Left ventricle myocardium inferior (tissue), 1 donor: ENCODE measurements at regions of chr2 and their contacts with region 1.

Region 1: DNA sequence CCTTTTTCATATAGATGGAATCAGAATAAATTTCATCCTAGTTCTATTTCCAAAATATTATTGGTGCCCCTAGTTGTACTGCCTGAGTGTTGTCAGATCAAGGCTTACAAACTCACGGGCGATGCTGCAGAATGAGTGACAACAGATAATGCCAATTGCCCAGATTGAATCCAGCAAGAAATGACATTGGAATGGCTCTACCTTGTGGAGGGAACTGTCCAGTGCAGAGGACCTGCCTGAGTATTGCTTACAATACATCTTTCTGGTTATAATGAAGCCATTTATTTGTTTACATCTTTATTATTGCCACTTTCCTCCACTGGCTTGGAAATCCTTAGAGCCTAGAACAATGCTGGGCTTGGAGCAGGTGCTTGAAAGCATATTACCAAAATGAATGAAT is 7.8 kb upstream of the IL1R2 start:
- DNase-seq: no peak
- H3K4me3 ChIP-seq: no peak overlapping the region
- H3K27ac ChIP-seq: no peak overlapping the region
- H3K4me1 ChIP-seq: peaks cover 8% of the 10 kb centered on the region
- H3K27me3 ChIP-seq: peaks cover 18% of the 10 kb centered on the region
- CTCF ChIP-seq: peak; percentile 48

Region 2: DNA sequence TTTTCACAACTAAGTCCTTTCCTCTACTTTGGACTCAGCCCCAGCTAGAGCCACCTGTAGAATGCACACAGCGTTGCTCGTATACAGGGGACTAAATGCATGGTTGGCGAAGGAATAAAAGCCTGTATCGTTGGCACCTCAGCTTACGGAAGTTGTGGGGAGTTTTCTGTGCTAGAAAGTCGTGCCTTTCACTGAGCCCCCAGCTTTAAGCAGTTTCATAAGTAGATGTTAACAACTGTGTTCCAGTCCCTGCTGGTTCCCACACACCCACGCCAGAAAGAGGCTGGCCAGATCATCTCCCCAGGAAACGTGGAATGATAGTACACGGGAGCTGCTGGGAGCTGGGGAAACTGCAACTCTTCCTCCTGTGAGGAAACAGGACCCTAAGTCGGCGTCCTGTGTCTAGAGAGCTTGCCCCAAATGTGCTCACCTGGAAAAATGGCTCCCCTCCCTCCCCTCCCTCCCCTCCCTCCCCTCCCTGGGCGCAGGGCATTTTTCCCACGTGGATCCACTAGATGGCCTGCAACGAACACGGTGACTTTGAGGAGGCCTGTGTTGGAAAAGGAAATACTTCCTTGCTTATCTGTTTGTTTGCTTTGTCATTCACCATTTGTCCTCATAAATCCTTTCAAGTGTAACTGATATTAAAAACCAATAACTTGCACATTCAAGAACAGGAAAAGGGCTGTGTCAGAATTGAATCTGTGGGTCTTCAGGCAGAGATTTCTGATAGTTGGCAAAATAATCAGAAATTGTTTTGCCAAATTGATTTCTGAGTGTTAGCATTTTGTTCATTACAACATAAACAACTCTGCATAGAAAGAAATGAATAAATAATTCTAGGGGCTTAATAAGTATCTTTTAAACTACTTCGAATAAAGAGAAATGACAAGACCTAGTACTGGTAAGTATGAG is 465.1 kb before region 1 on chr2:
- intact Hi-C with region 1: no loop called
- DNase-seq: peak; percentile 35
- H3K4me3 ChIP-seq: peak overlapping the region; percentile 36
- H3K27ac ChIP-seq: peak overlapping the region; percentile 60
- H3K4me1 ChIP-seq: peaks cover 37% of the 10 kb centered on the region
- H3K27me3 ChIP-seq: no peaks in the 10 kb centered on the region
- CTCF ChIP-seq: peak; percentile 63

Region 3: DNA sequence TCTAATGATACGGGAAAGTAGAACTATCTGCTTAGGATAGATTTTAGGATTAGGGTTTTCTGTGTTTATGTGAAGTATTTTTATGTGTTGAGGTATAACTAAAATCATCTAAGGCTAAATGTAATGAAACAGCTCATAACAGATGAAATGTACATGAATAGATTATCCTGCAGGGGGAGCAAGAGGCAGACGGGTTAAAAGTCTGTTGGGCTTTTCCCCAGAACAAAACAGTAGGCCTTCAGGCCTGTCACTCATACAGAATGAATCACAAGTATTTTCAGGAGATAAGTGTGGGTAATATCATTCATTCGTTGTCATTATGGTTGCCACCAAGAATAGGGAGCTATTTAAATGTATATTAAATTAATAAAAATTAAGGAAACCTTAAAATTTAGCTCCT is 100.1 kb before region 1 on chr2:
- intact Hi-C with region 1: loop called (anchors 10 kb)
- DNase-seq: no peak
- H3K4me3 ChIP-seq: no peak overlapping the region
- H3K27ac ChIP-seq: no peak overlapping the region
- H3K4me1 ChIP-seq: peaks cover 47% of the 10 kb centered on the region
- H3K27me3 ChIP-seq: no peaks in the 10 kb centered on the region
- CTCF ChIP-seq: peak; percentile 66

Region 4: GRCh38 chr2:102615622-102616436 is 631.9 kb after region 1 on chr2:
- intact Hi-C with region 1: no loop called
- DNase-seq: peak; percentile 35
- H3K4me3 ChIP-seq: no peak overlapping the region
- H3K27ac ChIP-seq: no peak overlapping the region
- H3K4me1 ChIP-seq: peaks cover 17% of the 10 kb centered on the region
- H3K27me3 ChIP-seq: peaks cover 99% of the 10 kb centered on the region
- CTCF ChIP-seq: peak; percentile 82